Esophagus muscularis mucosa (tissue), 4 donors: ENCODE measurements at regions of chr20 and their contacts with region 1.

Region 1: GRCh38 chr20:17536944-17537444 is 5.8 kb upstream of the BFSP1 start:
- DNase-seq: peak; percentile 96
- H3K4me3 ChIP-seq: no peak overlapping the region
- H3K27ac ChIP-seq: peak overlapping the region; percentile 64 to 83 (median 76)
- H3K4me1 ChIP-seq: peaks cover 0 to 65% (median 60%) of the 10 kb centered on the region in 4 donors
- H3K27me3 ChIP-seq: no peaks in the 10 kb centered on the region
- CTCF ChIP-seq: peak; percentile 89 to 95 (median 93)
- EP300 ChIP-seq: no peak
- POLR2A ChIP-seq: no peak

Region 2: GRCh38 chr20:16740365-16741072 is 796.5 kb before region 1 on chr20:
- intact Hi-C with region 1: no loop called
- DNase-seq: no peak
- H3K4me3 ChIP-seq: no peak overlapping the region
- H3K27ac ChIP-seq: no peak overlapping the region
- H3K4me1 ChIP-seq: no peaks in the 10 kb centered on the region
- H3K27me3 ChIP-seq: peaks cover 0 to 2% (median 0%) of the 10 kb centered on the region in 4 donors
- CTCF ChIP-seq: no peak
- EP300 ChIP-seq: no peak
- POLR2A ChIP-seq: no peak

Region 3: DNA sequence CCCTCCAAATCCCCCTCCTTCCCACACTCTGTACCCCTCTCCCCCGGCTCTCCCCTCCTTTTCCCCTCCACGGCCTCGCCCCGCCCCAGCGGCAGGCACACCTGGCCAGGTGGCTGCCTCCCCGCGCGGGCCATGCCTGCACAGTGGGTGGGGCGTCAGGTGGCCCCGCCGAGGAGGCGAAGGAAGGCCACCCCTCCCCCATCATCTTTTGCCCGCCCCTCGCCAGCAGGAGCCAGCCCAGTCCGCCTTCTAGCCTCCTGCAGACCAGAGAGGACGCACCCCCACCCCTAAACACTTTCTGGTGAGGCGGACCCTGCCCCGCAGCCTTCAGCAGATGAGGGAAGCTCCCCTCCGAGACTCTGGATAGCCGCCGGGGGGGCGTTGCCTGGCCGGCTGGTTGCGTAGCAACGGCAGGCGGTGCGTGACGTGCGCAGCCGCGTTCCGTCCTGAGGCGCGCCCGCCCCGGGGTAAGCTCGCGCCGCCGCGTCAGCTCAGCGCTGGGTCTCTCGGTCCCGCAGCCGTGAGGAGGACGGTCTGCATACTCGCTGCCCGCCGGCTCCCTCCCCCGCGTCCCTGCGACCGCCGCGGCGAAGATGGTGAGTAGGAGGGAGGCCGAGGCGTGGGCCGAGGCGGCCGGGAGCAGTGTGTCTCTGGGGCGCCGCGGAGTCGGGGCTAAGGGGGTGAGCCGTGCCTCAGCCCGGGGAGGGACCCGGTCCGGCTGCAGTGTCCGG is 32.8 kb after region 1 on chr20 and contains the start of gene DSTN:
- intact Hi-C with region 1: loop called (anchors 5 kb)
- DNase-seq: peak; percentile 98
- H3K4me3 ChIP-seq: peak within 1 kb of the TSS; percentile 74 to 99 (median 96)
- H3K27ac ChIP-seq: peak within 1 kb of the TSS; percentile 94 to 100 (median 100)
- H3K4me1 ChIP-seq: peaks cover 34 to 66% (median 60%) of the 10 kb centered on the region in 4 donors
- H3K27me3 ChIP-seq: no peaks in the 10 kb centered on the region
- CTCF ChIP-seq: no peak
- EP300 ChIP-seq: peak; percentile 61
- POLR2A ChIP-seq: peak; percentile 96
- total RNA-seq, gene DSTN: 2,370 to 3,630 (median 3,339) TPM

Region 4: DNA sequence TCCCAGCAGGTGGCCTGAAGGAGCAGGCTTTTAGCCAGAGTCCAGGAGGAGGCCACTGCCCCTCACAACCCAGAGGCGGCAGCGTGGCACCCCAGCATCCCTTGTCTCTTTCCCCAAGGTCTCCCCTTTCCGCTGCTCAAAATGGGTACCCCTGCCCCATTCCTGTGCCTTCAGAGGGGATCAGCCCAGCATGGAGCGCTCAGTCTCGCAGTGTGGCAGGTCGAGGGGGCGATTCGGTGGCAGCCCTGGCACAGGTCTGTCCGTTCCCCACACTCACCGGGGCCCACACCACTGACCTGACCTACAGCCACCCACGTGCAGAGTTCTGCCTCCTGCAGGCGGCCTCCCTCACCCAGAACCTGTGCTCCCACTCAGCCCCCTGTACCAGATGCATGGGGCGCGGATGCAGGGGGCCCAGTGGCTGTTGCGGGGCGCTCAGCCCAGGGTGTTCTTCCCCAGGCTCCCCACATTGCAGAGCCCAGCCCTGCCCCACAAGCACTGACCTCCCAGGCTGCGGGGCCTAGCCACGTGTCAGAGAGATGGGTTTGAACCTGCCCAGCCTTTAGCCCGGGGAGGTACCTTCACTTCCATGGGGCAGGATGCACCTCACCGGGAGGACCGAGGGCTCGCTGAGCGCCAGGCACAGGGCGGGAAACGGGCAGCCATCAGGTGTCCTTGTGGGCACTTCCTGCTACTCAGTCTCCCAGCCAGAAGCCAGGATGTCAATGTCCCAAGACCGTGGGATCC is 74.7 kb after region 1 on chr20:
- intact Hi-C with region 1: loop called (anchors 2 kb)
- DNase-seq: peak; percentile 92
- H3K4me3 ChIP-seq: no peak overlapping the region
- H3K27ac ChIP-seq: peak overlapping the region; percentile 82 to 86 (median 84)
- H3K4me1 ChIP-seq: peaks cover 63 to 100% (median 99%) of the 10 kb centered on the region in 4 donors
- H3K27me3 ChIP-seq: no peaks in the 10 kb centered on the region
- CTCF ChIP-seq: peak in 2 of 3 experiments; percentile 24 to 52
- EP300 ChIP-seq: no peak
- POLR2A ChIP-seq: no peak